Ovary (tissue), 10 donors: ENCODE measurements at regions of chr10 and their contacts with region 1.

Region 1: DNA sequence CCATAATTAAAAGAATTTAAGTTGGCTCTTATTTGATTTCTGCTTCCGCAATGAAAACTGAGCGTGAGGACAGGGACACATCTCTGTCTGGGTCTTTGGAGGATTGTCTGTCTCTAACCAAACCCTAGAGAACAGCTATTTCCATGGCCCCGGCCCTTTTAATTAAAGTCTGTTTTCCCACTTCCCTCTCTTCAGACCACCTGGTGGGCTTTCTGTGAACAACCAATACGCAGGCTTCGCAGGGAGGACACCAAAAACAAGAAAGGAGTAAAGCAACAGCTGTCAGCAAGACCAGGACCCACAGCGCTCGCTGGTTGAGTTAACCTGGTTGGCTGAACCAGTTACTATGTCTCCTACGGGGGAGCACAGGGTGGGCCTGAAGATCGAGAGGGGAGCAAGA is 217.1 kb upstream of the FRMD4A start:
- DNase-seq: no peak
- H3K4me3 ChIP-seq: no peak overlapping the region
- H3K27ac ChIP-seq: no peak overlapping the region
- H3K4me1 ChIP-seq: peaks cover 2% of the 10 kb centered on the region
- H3K27me3 ChIP-seq: no peaks in the 10 kb centered on the region
- CTCF ChIP-seq: no peak
- EP300 ChIP-seq: no peak
- POLR2A ChIP-seq: no peak

Region 2: DNA sequence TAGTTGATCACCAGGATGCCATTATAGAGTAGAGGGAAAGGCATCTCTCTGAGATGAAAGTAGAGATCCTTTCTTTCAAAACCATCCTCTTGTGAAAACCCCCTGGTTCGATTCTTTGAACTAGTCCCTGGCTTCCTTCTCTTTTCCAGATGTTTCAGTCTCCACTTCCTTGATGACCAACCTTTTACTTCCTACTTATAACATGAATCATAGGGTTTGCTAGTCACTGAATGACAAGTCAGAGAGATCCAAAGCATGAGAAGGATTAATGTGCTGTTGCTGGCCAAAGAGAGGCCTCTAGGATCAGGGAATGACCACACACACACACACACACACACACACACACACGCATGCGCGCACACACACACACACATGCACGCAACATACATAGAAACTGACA is 56.0 kb before region 1 on chr10:
- intact Hi-C with region 1: no loop called
- DNase-seq: no peak
- H3K4me3 ChIP-seq: no peak overlapping the region
- H3K27ac ChIP-seq: no peak overlapping the region
- H3K4me1 ChIP-seq: peaks cover 9% of the 10 kb centered on the region
- H3K27me3 ChIP-seq: no peaks in the 10 kb centered on the region
- CTCF ChIP-seq: no peak
- EP300 ChIP-seq: no peak
- POLR2A ChIP-seq: no peak

Region 3: DNA sequence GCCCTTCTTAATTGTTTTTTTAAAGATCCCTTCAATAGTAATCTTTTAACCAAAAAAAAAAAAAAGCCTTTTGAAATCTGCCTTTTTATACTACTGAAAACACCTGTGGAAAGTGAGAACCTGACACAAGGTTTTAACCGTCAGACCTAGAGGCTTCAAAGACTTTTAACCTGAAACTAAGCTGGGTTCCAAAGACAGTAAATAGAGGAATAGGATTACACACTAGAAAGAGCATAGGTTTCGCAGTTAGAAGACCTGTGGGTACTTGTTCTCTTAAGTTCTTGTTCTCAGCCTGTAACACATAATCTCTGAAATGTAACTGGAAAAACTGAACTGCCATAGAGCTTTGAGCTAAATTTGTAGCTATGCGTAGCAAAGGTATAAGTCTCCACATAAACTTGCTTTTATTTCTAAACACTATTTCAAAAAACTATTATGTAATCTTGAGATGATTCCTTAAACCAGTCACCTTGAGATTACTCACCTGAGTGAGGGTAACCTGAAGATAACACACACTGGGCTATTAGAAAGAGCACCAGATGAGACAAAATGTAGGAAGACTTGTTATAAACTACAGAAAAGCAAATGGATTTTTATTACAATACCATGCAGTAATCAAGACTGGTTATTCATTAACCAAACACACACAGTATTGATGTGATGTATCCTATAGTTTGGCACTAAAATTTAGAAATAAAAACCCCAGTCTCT is 20.5 kb before region 1 on chr10:
- intact Hi-C with region 1: loop called in 1 of 4 experiments (anchors 1 kb)
- DNase-seq: no peak
- H3K4me3 ChIP-seq: no peak overlapping the region
- H3K27ac ChIP-seq: no peak overlapping the region
- H3K4me1 ChIP-seq: peaks cover 2% of the 10 kb centered on the region
- H3K27me3 ChIP-seq: no peaks in the 10 kb centered on the region
- CTCF ChIP-seq: no peak
- EP300 ChIP-seq: no peak
- POLR2A ChIP-seq: no peak